ENCODE measurements at regions of chr1 and their contacts with region 1.

Region 1: GRCh38 chr1:71693581-71693980 is 588.8 kb downstream of the NEGR1 start:
- DNase-seq: no peak
- ATAC-seq: no peak
- H3K4me3 ChIP-seq: no peak overlapping the region
- H3K27ac ChIP-seq: no peak overlapping the region
- H3K4me1 ChIP-seq: no peaks in the 10 kb centered on the region
- H3K27me3 ChIP-seq: no peaks in the 10 kb centered on the region
- CTCF ChIP-seq: no peak

Region 2: GRCh38 chr1:71640116-71640515 is 53.5 kb before region 1 on chr1:
- intact Hi-C with region 1: loop called in 1 of 10 experiments (anchors 5 kb)
- DNase-seq: no peak
- ATAC-seq: peak in 6 of 8 donors; percentile 24 to 76 (median 56)
- H3K4me3 ChIP-seq: no peak overlapping the region
- H3K27ac ChIP-seq: peak overlapping the region in 1 of 10 donors; percentile 29
- H3K4me1 ChIP-seq: peaks cover 0 to 12% (median 0%) of the 10 kb centered on the region in 9 donors
- H3K27me3 ChIP-seq: no peaks in the 10 kb centered on the region
- CTCF ChIP-seq: no peak

Region 3: DNA sequence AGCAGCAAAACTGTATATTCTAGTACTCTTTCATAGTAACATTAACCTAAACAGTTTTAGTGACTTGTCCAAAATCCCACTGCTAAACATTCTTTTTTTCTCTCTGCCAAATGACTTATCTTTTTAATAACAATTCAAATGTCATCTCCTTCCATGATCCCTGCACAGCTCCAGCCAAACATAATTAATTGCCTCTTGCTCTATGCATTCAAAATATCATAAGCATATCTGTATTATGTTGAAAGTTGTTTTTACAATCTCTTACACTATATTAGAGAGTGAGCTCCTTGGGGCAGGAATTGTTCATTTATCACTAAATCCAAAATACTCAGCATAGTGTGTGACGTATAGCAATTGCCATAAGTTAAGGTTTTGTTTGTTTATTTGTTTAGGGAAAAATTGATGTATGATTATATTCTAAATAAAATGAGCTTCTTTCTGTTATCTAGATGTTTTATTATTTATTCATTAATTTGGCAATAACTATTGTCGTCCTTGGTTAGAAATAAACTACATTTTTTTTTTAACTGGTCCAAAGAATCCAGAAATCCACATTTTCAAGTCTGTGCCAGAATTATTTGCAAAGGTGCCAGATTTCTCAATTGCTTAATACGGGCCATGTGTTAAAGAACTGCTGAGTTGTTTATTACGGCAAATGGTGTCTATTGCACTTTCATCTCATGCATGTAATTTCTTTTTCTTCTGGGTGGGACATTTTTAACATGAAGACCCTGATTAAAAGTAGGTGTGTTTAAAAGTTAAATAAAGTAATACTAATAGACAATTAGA is 35.5 kb before region 1 on chr1:
- intact Hi-C with region 1: no loop called
- DNase-seq: peak in 1 of 2 donors; percentile 6
- ATAC-seq: peak in 4 of 8 donors; percentile 14 to 49 (median 36)
- H3K4me3 ChIP-seq: no peak overlapping the region
- H3K27ac ChIP-seq: no peak overlapping the region
- H3K4me1 ChIP-seq: peaks cover 0 to 5% (median 0%) of the 10 kb centered on the region in 9 donors
- H3K27me3 ChIP-seq: no peaks in the 10 kb centered on the region
- CTCF ChIP-seq: no peak